Cardiac septum (tissue), 1 donor: ENCODE measurements at regions of chr9 and their contacts with region 1.

Region 1: GRCh38 chr9:83707768-83708514 is at the start of gene UBQLN1:
- DNase-seq: peak; percentile 95
- total RNA-seq, gene UBQLN1: 107 TPM

Region 2: DNA sequence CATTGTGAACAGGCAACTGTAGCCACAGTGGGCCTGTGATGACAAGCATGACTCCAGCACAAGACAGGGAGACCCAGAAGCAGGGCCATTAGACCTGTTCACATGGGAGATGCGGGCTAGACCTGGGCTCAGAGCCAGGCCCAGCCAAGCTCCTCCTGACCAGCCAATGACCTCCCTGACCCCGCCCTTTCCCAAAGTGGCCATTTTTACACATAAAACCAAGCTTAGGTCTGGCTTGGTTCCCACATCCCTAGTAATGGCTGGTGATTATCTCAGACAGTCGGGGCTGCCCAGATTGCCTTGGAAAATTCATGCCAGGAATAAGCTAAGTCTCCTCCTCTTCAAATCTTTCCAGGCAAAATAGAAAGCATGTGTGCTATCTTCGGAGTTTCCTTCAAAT is 263.8 kb before region 1 on chr9:
- intact Hi-C with region 1: loop called (anchors 10 kb)
- DNase-seq: no peak

Region 3: DNA sequence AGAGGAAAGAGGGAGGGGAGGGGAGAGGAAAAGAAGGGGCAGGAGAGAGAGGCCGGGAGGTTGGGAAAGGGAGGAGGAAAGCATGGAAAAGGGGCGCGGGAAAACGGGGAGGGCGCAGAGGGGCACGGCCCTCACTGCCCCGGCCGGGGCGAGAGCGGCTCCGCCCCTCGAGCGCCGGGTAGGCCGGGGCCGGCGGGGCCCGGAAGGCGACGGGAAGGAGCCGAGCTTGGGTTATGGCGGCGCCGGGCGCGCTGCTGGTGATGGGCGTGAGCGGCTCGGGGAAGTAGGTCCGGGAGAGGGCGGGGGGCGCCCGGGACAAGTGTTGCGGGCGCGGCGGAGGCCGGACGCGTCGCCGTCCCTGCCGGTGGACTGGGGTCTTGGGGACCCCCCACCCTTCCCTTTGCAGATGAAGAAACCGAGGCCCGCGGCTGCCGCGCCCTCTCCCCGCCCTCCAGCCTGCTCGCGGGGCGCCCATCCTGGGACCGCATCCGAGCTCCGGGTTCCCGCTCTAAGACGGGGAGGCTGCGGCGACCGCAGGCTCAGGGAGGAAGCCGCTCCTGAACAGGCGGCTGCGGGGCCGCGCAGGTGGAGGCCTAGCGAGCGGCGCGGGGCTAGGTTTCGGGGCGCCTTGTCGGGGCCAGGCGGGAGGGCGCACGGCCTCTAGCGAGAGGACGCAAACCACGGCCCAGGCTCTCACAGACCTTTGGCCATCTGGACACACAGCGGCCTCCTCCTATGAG is 84.8 kb before region 1 on chr9 and contains the start of gene IDNK:
- intact Hi-C with region 1: loop called (anchors 2 kb)
- DNase-seq: peak; percentile 90
- total RNA-seq, gene IDNK: 5.4 TPM

Region 4: DNA sequence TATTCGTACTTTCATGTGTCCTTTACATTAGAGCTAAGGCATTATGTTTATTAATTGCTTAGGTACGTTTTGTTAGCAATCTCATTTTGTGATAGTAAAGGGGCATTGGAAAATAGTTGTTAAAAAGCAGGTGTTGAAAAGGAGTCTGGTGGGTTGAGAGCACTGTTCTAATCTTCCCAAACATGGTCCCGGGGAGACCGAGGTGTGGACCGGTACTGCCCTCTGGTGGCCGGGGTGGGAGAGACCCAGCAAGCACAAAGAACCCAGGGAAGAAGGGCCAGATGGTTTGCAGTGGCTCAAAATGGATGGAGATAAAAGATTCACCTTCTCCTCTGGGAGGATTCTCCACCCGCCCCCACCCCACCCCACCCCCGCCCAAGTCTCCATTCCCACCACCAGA is 58.9 kb before region 1 on chr9:
- intact Hi-C with region 1: loop called (anchors 5 kb)
- DNase-seq: peak; percentile 87

Region 5: DNA sequence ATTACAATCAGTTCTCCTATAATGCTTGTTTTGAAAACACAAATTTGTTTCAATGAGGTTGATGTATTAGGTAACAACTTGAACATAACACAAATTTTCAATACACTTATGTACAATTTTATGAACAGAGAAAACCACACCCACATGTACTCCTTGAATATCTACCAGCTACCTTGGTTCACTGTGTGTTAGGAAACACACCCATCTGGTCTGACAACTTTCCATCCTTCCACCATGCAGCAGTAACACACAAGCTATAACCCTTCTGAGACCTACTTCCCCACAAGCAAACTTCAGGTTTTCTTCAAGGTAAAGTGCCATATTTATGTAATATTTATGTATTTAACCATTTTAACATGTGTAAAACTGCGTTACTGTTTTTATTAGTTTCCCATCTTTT is 36.3 kb after region 1 on chr9:
- intact Hi-C with region 1: no loop called
- DNase-seq: no peak